Sigmoid colon (tissue), 7 donors: ENCODE measurements at regions of chr11 and their contacts with region 1.

Region 1: GRCh38 chr11:64864473-64865285 is 13.7 kb downstream of the EHD1 start:
- DNase-seq: peak; percentile 94
- H3K4me3 ChIP-seq: peak overlapping the region in 2 of 4 donors; percentile 11 to 17
- H3K27ac ChIP-seq: peak overlapping the region; percentile 94 to 97 (median 97)
- H3K4me1 ChIP-seq: peaks cover 0 to 92% (median 83%) of the 10 kb centered on the region in 4 donors
- H3K27me3 ChIP-seq: no peaks in the 10 kb centered on the region
- CTCF ChIP-seq: no peak
- EP300 ChIP-seq: peak in 1 of 4 donors; percentile 29
- POLR2A ChIP-seq: no peak

Region 2: GRCh38 chr11:64878494-64879243 is 14.0 kb after region 1 on chr11 and contains the start of gene EHD1:
- intact Hi-C with region 1: loop called (anchors 1 kb)
- DNase-seq: peak; percentile 99
- H3K4me3 ChIP-seq: peak within 1 kb of the TSS; percentile 61 to 89 (median 72)
- H3K27ac ChIP-seq: peak within 1 kb of the TSS; percentile 92 to 97 (median 95)
- H3K4me1 ChIP-seq: peaks cover 0 to 49% (median 44%) of the 10 kb centered on the region in 4 donors
- H3K27me3 ChIP-seq: no peaks in the 10 kb centered on the region
- CTCF ChIP-seq: peak in 3 of 4 experiments; percentile 3 to 19 (median 15)
- EP300 ChIP-seq: no peak
- POLR2A ChIP-seq: peak; percentile 96 to 97
- total RNA-seq, gene EHD1: 38.5 to 73.1 (median 44.1) TPM